GM18951 (cell line): ENCODE measurements at regions of chr11 and their contacts with region 1.

Region 1: DNA sequence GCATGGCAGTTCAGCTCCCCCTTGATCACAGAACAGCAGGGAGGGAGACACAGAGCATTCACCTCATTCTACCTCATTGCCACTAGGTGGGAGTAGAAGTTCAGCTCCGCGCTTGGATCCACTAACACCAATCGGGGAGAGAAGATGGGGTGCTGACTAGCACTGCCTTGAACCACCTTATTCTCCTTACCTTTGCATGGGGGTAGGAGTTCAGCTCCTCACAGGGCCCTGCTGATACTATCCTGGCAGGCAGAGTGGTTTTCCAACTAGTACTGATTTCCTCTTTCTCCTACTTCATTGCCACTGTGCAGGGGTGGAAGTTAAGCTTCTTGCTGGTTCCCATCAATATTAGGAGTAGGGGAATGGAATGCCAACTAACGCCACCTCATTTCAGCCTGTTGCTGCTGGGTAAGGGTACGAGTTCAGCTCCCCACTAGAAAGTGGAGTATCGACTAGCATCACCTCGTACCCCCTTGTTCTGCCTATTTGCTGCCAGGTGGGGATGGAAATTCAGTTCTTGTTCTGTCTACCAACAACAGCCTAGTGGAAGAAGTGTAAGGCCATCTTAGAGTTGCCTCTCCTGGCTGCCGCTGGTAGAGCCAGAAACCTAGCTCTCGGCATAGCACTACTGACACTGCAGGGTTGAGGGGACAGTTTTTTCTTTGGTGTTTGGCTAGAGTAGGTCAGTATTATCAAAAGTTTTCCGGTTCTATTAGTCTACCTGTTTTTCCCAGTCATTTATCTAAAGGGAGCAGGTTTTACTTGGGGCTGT is 550.9 kb upstream of the CCDC90B start:
- POLR2A ChIP-seq: no peak

Region 2: DNA sequence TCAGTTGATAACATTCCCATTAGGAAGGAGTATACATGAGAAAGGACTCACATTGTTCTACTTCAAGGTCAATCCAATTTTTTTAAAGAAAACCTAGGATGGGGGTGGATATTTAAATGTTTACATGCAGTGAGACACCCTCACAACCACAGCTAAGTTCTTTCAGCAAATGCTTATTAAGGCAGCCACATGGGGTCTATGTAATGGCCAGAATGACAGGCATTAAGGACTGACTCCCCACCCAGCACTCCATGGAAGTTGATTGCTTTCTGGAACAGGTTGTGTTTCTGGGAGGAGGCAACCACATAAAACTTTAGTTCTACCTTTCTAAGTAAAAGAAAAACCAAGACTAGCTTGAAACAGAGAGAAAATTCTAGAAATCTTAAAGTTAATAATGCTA is 111.1 kb after region 1 on chr11:
- in situ Hi-C with region 1: no loop called
- POLR2A ChIP-seq: no peak

Region 3: DNA sequence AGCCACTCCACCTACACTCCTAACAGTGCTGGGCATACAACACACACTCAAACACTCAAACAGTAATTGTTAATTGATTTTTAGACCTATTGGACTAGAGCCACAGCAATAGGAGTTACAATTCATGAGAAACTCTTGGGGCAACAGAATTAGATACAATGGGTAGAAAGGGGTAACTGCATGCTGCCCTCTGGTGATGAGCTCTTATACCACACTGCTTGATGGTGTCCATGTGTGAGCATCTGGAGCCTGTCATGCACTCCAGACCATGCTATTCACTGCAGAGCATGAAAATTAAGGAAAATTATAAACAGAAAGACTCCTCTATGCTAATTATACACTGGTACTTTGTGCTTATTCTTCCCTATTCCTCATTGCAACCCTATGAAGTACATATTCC is 424.6 kb after region 1 on chr11:
- in situ Hi-C with region 1: loop called (anchors 25 kb)
- POLR2A ChIP-seq: no peak

Region 4: DNA sequence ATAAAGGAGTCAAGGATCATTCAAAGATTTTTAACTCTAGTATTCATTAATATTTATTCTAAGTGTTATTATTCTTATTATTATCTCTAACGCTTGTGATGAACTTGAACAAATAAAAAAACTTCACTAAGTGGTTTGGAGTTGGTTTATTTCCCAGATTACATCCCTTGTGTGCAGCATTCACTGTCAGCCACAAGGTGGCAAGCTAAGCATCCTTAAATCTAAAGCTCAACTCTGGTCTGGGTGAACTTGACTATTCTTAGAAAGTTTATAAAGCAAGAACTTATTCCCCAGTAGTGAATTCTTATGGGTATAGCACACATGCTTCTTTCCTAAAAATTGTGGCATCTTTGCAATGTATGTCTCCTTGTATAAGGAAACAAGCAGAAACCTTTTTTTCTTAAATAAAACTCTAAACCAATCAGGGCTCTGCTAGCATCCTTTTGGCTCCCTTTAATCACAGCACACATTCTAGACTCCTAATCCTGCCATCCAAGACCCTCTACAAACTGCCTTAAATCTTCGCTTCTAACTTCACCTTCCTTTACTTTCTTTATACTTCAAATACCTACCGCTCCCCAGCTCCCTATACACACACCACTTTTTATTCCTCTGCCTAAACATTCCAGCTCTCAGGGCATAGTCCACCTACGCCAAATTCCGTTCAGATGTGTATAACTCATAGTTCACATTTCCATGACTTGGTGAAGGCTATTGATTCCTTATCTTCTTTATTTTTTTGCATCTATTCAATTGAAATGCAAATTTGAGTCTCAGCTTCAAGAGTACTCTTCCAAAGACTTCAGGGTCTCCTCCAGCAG is 721.2 kb after region 1 on chr11:
- in situ Hi-C with region 1: loop called (anchors 25 kb)
- POLR2A ChIP-seq: no peak